CD8-positive, alpha-beta T cell (primary cell): ENCODE measurements at regions of chr16 and their contacts with region 1.

Region 1: GRCh38 chr16:2429034-2429770 is at the start of gene CCNF:
- DNase-seq: peak; percentile 96 to 98 (median 98)
- ATAC-seq: peak; percentile 98
- H3K4me3 ChIP-seq: peak within 1 kb of the TSS; percentile 81 to 92
- H3K4me3 Mint-ChIP-seq: peak within 1 kb of the TSS; percentile 85
- H3K27ac ChIP-seq: peak within 1 kb of the TSS; percentile 35 to 43
- H3K27ac Mint-ChIP-seq: peak within 1 kb of the TSS; percentile 64
- H3K4me1 ChIP-seq: peaks cover 12% of the 10 kb centered on the region
- H3K4me1 Mint-ChIP-seq: peaks cover 14% of the 10 kb centered on the region
- H3K27me3 ChIP-seq: no peaks in the 10 kb centered on the region
- H3K27me3 Mint-ChIP-seq: no peaks in the 10 kb centered on the region
- CTCF ChIP-seq: no peak
- total RNA-seq, gene CCNF: 0.61 to 1.2 TPM

Region 2: GRCh38 chr16:2267913-2268666 is 161.1 kb before region 1 on chr16 and contains the start of gene RNPS1:
- CTCF ChIA-PET with region 1: no interaction called
- POLR2A ChIA-PET with region 1: no interaction called
- intact Hi-C with region 1: loop called (anchors 1 to 5 kb)
- DNase-seq: peak; percentile 90 to 99 (median 97)
- ATAC-seq: peak; percentile 81
- H3K4me3 ChIP-seq: peak within 1 kb of the TSS; percentile 94 to 100
- H3K4me3 Mint-ChIP-seq: peak within 1 kb of the TSS; percentile 96
- H3K27ac ChIP-seq: peak within 1 kb of the TSS; percentile 96 to 99
- H3K27ac Mint-ChIP-seq: peak within 1 kb of the TSS; percentile 97
- H3K4me1 ChIP-seq: peaks cover 30% of the 10 kb centered on the region
- H3K4me1 Mint-ChIP-seq: peaks cover 34% of the 10 kb centered on the region
- H3K27me3 ChIP-seq: no peaks in the 10 kb centered on the region
- H3K27me3 Mint-ChIP-seq: no peaks in the 10 kb centered on the region
- CTCF ChIP-seq: no peak
- total RNA-seq, gene RNPS1: 239 to 246 TPM

Region 3: GRCh38 chr16:2278956-2279800 is 150.0 kb before region 1 on chr16:
- CTCF ChIA-PET with region 1: no interaction called
- POLR2A ChIA-PET with region 1: no interaction called
- intact Hi-C with region 1: no loop called
- DNase-seq: no peak
- ATAC-seq: no peak
- H3K4me3 ChIP-seq: no peak overlapping the region
- H3K4me3 Mint-ChIP-seq: no peak overlapping the region
- H3K27ac ChIP-seq: no peak overlapping the region
- H3K27ac Mint-ChIP-seq: no peak overlapping the region
- H3K4me1 ChIP-seq: no peaks in the 10 kb centered on the region
- H3K4me1 Mint-ChIP-seq: no peaks in the 10 kb centered on the region
- H3K27me3 ChIP-seq: no peaks in the 10 kb centered on the region
- H3K27me3 Mint-ChIP-seq: no peaks in the 10 kb centered on the region
- CTCF ChIP-seq: no peak

Region 4: GRCh38 chr16:2289282-2289681 is 139.9 kb before region 1 on chr16:
- CTCF ChIA-PET with region 1: no interaction called
- POLR2A ChIA-PET with region 1: no interaction called
- intact Hi-C with region 1: no loop called
- DNase-seq: no peak
- ATAC-seq: no peak
- H3K4me3 ChIP-seq: no peak overlapping the region
- H3K4me3 Mint-ChIP-seq: no peak overlapping the region
- H3K27ac ChIP-seq: no peak overlapping the region
- H3K27ac Mint-ChIP-seq: no peak overlapping the region
- H3K4me1 ChIP-seq: no peaks in the 10 kb centered on the region
- H3K4me1 Mint-ChIP-seq: no peaks in the 10 kb centered on the region
- H3K27me3 ChIP-seq: no peaks in the 10 kb centered on the region
- H3K27me3 Mint-ChIP-seq: no peaks in the 10 kb centered on the region
- CTCF ChIP-seq: no peak

Region 5: DNA sequence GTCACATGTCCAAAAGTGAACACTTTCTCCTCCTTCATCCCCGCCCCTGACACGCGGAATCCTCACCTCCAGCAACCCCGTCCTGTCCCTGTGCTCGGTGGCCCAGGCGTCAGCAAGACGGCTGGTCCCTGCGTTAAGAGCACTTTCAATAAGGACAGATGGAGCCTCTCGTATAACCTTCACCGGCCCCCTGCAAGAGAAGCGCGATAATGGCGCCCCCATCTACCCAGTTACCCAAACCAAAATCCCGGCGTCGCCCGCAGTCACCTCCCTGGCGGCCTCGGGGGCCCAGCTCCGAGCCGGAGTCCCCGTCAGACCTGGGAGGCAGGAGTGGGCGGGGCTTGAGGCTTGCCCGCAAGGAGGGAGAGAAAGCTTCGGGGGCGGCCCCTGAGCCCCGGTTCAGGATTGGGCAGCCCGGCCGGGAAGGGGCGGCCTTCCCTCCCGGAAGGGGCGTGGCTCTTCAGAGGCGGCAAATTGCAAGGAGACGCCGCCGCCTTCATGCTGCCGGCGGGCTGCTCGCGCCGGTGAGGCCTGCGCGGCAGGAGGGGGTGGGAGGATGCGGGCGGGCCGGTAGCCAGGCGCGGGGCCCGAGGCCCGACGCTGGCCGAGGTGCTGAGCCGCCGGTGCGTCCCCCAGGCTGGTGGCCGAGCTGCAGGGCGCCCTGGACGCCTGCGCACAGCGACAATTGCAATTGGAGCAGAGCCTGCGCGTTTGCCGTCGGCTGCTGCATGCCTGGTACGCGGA is 30.6 kb after region 1 on chr16 and contains the start of gene TEDC2:
- CTCF ChIA-PET with region 1: no interaction called
- POLR2A ChIA-PET with region 1: interaction called, 3 read pairs
- intact Hi-C with region 1: loop called (anchors 1 kb)
- DNase-seq: peak; percentile 92 to 98 (median 98)
- ATAC-seq: peak; percentile 100
- H3K4me3 ChIP-seq: peak within 1 kb of the TSS; percentile 54 to 62
- H3K4me3 Mint-ChIP-seq: peak within 1 kb of the TSS; percentile 82
- H3K27ac ChIP-seq: peak within 1 kb of the TSS in 1 of 2 experiments; percentile 8
- H3K27ac Mint-ChIP-seq: peak within 1 kb of the TSS; percentile 64
- H3K4me1 ChIP-seq: peaks cover 9% of the 10 kb centered on the region
- H3K4me1 Mint-ChIP-seq: peaks cover 6% of the 10 kb centered on the region
- H3K27me3 ChIP-seq: no peaks in the 10 kb centered on the region
- H3K27me3 Mint-ChIP-seq: no peaks in the 10 kb centered on the region
- CTCF ChIP-seq: no peak
- total RNA-seq, gene TEDC2: 0.30 to 0.69 TPM

Region 6: GRCh38 chr16:2486645-2487516 is 57.7 kb after region 1 on chr16:
- CTCF ChIA-PET with region 1: interaction called, 5 read pairs
- POLR2A ChIA-PET with region 1: no interaction called
- intact Hi-C with region 1: loop called (anchors 1 to 5 kb)
- DNase-seq: peak; percentile 61 to 93 (median 79)
- ATAC-seq: peak; percentile 97
- H3K4me3 ChIP-seq: peak overlapping the region in 1 of 2 experiments; percentile 5
- H3K4me3 Mint-ChIP-seq: peak overlapping the region; percentile 66
- H3K27ac ChIP-seq: peak overlapping the region in 1 of 2 experiments; percentile 40
- H3K27ac Mint-ChIP-seq: peak overlapping the region; percentile 90
- H3K4me1 ChIP-seq: peaks cover 18% of the 10 kb centered on the region
- H3K4me1 Mint-ChIP-seq: peaks cover 12% of the 10 kb centered on the region
- H3K27me3 ChIP-seq: no peaks in the 10 kb centered on the region
- H3K27me3 Mint-ChIP-seq: no peaks in the 10 kb centered on the region
- CTCF ChIP-seq: peak; percentile 77

Region 7: DNA sequence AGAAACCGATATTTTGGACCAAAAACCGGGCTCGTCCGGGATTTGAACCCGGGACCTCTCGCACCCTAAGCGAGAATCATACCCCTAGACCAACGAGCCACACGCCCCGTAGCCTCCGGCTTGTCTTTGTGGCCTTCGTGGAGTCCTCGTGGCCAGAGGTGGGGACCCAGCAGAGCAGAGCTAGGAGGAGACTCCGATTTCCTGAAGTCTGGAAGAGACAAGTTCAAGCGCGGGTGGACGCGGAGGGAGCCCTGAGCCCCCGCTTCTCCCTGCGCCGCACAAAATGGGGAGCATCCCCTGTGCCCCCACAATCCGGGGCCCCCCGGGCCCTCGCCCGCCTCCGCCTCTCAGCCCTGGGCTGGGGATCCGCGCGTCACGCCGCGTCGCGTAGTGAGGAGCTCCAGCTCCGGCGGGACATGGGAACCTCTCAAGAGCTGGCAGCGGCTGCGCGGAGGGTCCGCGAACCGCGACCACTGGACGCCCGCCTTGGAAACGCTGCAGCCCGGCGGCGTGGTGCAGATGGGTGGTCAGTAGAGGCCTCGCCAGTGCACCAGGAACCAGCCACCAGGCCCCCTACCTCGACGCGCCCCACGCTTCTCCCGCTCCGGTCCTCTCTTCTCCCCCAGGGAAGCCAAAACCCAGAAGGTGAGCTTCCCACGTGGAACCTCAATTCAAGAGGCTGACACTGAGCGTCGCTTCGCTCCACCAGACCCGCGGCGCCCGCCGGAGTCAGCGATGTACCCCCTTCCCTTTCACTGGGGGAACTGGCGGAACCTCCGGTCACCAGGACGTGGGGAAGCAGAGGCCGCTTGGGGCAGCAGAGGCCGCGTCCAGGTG is 753.6 kb after region 1 on chr16:
- CTCF ChIA-PET with region 1: no interaction called
- POLR2A ChIA-PET with region 1: no interaction called
- intact Hi-C with region 1: loop called in 1 of 2 experiments (anchors 10 kb)
- DNase-seq: peak in 6 of 9 experiments; percentile 38 to 74 (median 64)
- ATAC-seq: peak; percentile 64
- H3K4me3 ChIP-seq: peak overlapping the region; percentile 38 to 43
- H3K4me3 Mint-ChIP-seq: peak overlapping the region; percentile 78
- H3K27ac ChIP-seq: no peak overlapping the region
- H3K27ac Mint-ChIP-seq: peak overlapping the region; percentile 66
- H3K4me1 ChIP-seq: peaks cover 19% of the 10 kb centered on the region
- H3K4me1 Mint-ChIP-seq: peaks cover 19% of the 10 kb centered on the region
- H3K27me3 ChIP-seq: peaks cover 31 to 38% of the 10 kb centered on the region in 2 experiments
- H3K27me3 Mint-ChIP-seq: peaks cover 65% of the 10 kb centered on the region
- CTCF ChIP-seq: no peak